ENCODE measurements at regions of chr1 and their contacts with region 1.

Region 1: DNA sequence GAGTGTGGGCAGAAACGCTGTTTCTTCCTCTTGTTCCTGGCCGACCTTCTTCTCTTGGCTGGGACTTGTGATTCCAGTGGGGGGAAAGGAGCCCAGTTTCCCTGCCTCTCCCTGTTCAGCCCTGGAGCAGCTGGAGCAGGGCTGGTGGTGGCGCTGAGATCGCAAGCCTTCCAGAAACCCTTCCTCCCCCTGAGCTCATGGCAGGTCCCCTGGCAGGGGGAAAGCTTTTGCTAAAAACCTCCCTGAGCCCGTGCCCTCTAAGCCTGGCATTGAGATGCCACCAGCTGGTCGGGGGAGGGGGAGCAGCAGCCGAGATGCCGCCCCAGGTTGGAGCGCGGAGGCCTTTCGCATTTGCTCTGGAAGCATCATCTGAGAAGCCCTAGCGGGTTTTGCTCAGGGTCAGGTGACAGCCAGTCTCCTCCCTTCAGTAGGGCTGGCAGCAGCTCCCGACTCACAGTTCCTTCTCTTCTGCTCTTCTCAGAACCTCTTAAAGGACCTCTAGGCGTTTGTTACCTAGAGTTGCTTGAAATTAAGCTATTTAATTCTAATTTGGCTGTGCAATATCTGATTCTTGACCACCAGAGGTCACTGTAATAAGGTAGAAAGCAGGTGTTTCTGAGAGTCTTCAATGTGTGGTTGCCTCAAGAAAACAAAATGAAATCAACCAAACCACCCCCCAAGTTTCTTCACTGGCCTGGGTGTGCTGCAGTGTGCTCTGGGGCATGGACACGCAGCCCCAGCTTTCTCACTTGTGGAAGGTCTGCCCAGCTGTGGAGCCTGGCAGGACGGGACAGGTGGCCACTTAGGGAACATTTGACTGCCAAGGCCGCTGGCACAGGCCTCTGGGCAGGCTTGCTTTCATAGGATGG is 257.3 kb downstream of the CAMTA1 start:
- DNase-seq: peak; percentile 72
- CTCF ChIP-seq: peak; percentile 41

Region 2: DNA sequence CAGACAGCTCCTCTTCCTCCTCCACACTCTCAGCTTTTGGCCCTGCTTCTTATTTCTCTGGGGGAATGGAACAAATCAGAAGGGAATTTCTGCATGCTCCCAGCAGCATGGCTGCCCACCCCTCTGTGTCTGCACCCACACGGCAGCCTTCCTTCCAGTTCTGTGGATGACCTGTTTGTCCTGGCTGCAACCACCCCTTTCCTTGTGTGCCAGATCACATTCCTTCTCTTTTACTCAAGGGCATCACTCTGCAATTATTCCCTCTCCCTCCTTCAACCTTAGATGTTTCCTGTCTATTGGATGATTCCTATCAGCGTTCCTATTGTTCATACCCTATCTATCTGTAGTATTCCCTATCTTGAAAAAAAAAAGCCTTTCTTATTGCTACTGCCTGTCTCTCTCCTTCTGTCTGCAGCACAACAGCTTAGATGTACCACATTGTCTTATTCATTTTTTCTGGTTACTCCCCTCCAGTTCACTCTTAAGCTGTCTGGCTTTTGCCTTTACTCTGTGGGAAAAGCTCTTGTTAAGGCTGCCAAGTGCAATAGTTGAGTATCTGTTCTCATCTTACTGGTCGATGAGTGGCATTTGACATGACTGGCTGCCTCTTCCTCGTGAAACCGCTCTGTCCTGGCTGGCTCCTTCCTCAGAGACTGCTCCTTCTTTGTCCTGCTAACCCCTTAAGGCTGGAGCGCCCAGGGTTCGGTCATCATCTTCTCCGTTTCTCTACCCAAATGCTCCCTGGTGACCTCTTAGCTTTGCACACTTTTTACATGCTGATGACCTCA is 93.8 kb after region 1 on chr1:
- CTCF ChIA-PET with region 1: no interaction called
- POLR2A ChIA-PET with region 1: no interaction called
- DNase-seq: no peak
- CTCF ChIP-seq: no peak

Region 3: GRCh38 chr1:7207875-7208646 is 165.5 kb after region 1 on chr1:
- CTCF ChIA-PET with region 1: interaction called, 15 read pairs
- POLR2A ChIA-PET with region 1: no interaction called
- DNase-seq: peak; percentile 57
- CTCF ChIP-seq: peak; percentile 58

Region 4: GRCh38 chr1:7646981-7647901 is 604.7 kb after region 1 on chr1:
- CTCF ChIA-PET with region 1: interaction called, 16 read pairs
- POLR2A ChIA-PET with region 1: no interaction called
- DNase-seq: peak; percentile 89
- CTCF ChIP-seq: peak; percentile 98

Measured in GM10248 (cell line).